ENCODE measurements at regions of chr1 and their contacts with region 1.

Region 1: GRCh38 chr1:186325239-186325638 is 49.8 kb downstream of the TPR start:
- DNase-seq: peak in 4 of 5 donors; percentile 27 to 29 (median 28)
- H3K4me3 ChIP-seq: no peak overlapping the region
- H3K4me3 Mint-ChIP-seq: no peak overlapping the region
- H3K27ac ChIP-seq: no peak overlapping the region
- H3K27ac Mint-ChIP-seq: peak overlapping the region in 2 of 7 donors; percentile 61 to 79
- H3K4me1 ChIP-seq: peaks cover 6% of the 10 kb centered on the region
- H3K4me1 Mint-ChIP-seq: peaks cover 4 to 23% (median 15%) of the 10 kb centered on the region in 4 donors
- H3K27me3 ChIP-seq: no peaks in the 10 kb centered on the region
- H3K27me3 Mint-ChIP-seq: no peaks in the 10 kb centered on the region

Region 2: DNA sequence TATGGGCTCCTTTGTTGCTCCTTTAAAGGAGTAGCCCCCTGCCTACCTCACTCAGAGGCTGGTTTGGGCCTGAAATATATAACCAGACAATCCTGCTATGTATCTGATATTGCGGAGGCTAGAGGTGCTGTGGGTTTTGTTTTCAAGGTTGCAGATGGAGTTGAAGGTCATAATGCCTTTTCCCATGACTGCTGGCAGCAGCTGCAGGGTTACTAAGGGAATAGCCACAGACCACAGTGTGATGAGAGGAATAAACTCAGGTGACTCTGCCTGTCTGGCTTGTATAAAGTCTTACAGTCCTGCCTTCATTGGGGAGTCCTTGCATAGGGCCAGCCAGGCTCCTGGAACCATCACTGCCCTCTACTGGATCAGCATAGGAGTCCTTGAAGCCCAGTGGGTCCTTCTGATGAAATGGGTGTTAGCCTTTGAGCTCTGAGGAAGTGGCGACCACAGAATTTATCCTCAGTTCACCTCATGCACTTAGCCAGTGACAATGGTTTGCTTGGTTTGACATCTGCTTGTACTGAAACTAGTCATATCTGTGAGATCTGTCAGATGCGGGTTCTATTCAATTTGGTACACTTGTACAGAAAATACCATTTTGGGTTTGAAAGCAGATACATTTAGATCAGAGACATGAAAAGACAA is 765.4 kb before region 1 on chr1:
- CTCF ChIA-PET with region 1: no interaction called
- POLR2A ChIA-PET with region 1: no interaction called
- intact Hi-C with region 1: no loop called
- DNase-seq: peak; percentile 56 to 60 (median 59)
- H3K4me3 ChIP-seq: no peak overlapping the region
- H3K4me3 Mint-ChIP-seq: peak overlapping the region in 6 of 8 donors; percentile 5 to 78 (median 62)
- H3K27ac ChIP-seq: no peak overlapping the region
- H3K27ac Mint-ChIP-seq: peak overlapping the region; percentile 76 to 94 (median 86)
- H3K4me1 ChIP-seq: peaks cover 51% of the 10 kb centered on the region
- H3K4me1 Mint-ChIP-seq: peaks cover 39 to 52% (median 46%) of the 10 kb centered on the region in 4 donors
- H3K27me3 ChIP-seq: no peaks in the 10 kb centered on the region
- H3K27me3 Mint-ChIP-seq: no peaks in the 10 kb centered on the region

Region 3: DNA sequence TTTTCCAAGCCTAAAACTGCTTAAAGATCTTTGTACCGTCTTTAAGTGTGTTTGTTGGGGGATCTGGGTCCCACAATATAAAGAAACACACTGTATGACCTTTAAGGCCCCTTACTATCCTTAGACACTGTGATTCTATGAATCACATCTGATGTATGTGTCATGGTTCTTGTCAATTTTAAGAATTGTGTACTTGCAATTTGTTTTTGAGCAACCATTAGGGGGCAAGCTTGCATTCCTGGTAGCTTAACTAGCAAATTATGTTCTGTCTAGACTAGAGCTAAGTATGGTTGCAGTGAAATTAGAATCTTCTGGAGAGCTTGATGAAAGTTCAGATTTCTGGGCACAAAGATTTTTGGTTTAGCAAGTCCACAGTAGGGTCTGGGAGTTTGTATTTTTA is 169.6 kb before region 1 on chr1:
- CTCF ChIA-PET with region 1: no interaction called
- POLR2A ChIA-PET with region 1: no interaction called
- intact Hi-C with region 1: loop called (anchors 10 kb)
- DNase-seq: peak in 1 of 5 donors; percentile 4
- H3K4me3 ChIP-seq: no peak overlapping the region
- H3K4me3 Mint-ChIP-seq: no peak overlapping the region
- H3K27ac ChIP-seq: no peak overlapping the region
- H3K27ac Mint-ChIP-seq: no peak overlapping the region
- H3K4me1 ChIP-seq: no peaks in the 10 kb centered on the region
- H3K4me1 Mint-ChIP-seq: no peaks in the 10 kb centered on the region
- H3K27me3 ChIP-seq: no peaks in the 10 kb centered on the region
- H3K27me3 Mint-ChIP-seq: peaks cover 0 to 4% of the 10 kb centered on the region in 2 donors

Region 4: GRCh38 chr1:186183219-186183618 is 142.0 kb before region 1 on chr1:
- CTCF ChIA-PET with region 1: no interaction called
- POLR2A ChIA-PET with region 1: no interaction called
- intact Hi-C with region 1: no loop called
- DNase-seq: no peak
- H3K4me3 ChIP-seq: no peak overlapping the region
- H3K4me3 Mint-ChIP-seq: no peak overlapping the region
- H3K27ac ChIP-seq: no peak overlapping the region
- H3K27ac Mint-ChIP-seq: no peak overlapping the region
- H3K4me1 ChIP-seq: no peaks in the 10 kb centered on the region
- H3K4me1 Mint-ChIP-seq: peaks cover 0 to 3% (median 0%) of the 10 kb centered on the region in 4 donors
- H3K27me3 ChIP-seq: no peaks in the 10 kb centered on the region
- H3K27me3 Mint-ChIP-seq: peaks cover 0 to 4% of the 10 kb centered on the region in 2 donors

Region 5: GRCh38 chr1:186212544-186213226 is 112.6 kb before region 1 on chr1:
- CTCF ChIA-PET with region 1: no interaction called
- POLR2A ChIA-PET with region 1: no interaction called
- intact Hi-C with region 1: no loop called
- DNase-seq: peak in 4 of 5 donors; percentile 2 to 11 (median 6)
- H3K4me3 ChIP-seq: no peak overlapping the region
- H3K4me3 Mint-ChIP-seq: no peak overlapping the region
- H3K27ac ChIP-seq: no peak overlapping the region
- H3K27ac Mint-ChIP-seq: no peak overlapping the region
- H3K4me1 ChIP-seq: no peaks in the 10 kb centered on the region
- H3K4me1 Mint-ChIP-seq: no peaks in the 10 kb centered on the region
- H3K27me3 ChIP-seq: no peaks in the 10 kb centered on the region
- H3K27me3 Mint-ChIP-seq: peaks cover 5 to 13% of the 10 kb centered on the region in 2 donors

Region 6: GRCh38 chr1:186231962-186232361 is 93.3 kb before region 1 on chr1:
- CTCF ChIA-PET with region 1: no interaction called
- POLR2A ChIA-PET with region 1: no interaction called
- intact Hi-C with region 1: no loop called
- DNase-seq: no peak
- H3K4me3 ChIP-seq: no peak overlapping the region
- H3K4me3 Mint-ChIP-seq: no peak overlapping the region
- H3K27ac ChIP-seq: no peak overlapping the region
- H3K27ac Mint-ChIP-seq: no peak overlapping the region
- H3K4me1 ChIP-seq: no peaks in the 10 kb centered on the region
- H3K4me1 Mint-ChIP-seq: no peaks in the 10 kb centered on the region
- H3K27me3 ChIP-seq: no peaks in the 10 kb centered on the region
- H3K27me3 Mint-ChIP-seq: peaks cover 4 to 13% of the 10 kb centered on the region in 2 donors

Region 7: GRCh38 chr1:186272486-186272885 is 52.8 kb before region 1 on chr1:
- CTCF ChIA-PET with region 1: interaction called, 4 read pairs
- POLR2A ChIA-PET with region 1: no interaction called
- intact Hi-C with region 1: loop called (anchors 1 kb)
- DNase-seq: peak in 4 of 5 donors; percentile 11 to 19 (median 13)
- H3K4me3 ChIP-seq: no peak overlapping the region
- H3K4me3 Mint-ChIP-seq: no peak overlapping the region
- H3K27ac ChIP-seq: no peak overlapping the region
- H3K27ac Mint-ChIP-seq: no peak overlapping the region
- H3K4me1 ChIP-seq: no peaks in the 10 kb centered on the region
- H3K4me1 Mint-ChIP-seq: peaks cover 0 to 2% (median 0%) of the 10 kb centered on the region in 4 donors
- H3K27me3 ChIP-seq: no peaks in the 10 kb centered on the region
- H3K27me3 Mint-ChIP-seq: no peaks in the 10 kb centered on the region

Region 8: GRCh38 chr1:186304982-186305949 is 20.0 kb before region 1 on chr1:
- CTCF ChIA-PET with region 1: interaction called, 9 read pairs
- POLR2A ChIA-PET with region 1: interaction called, 4 read pairs
- intact Hi-C with region 1: loop called (anchors 1 kb)
- DNase-seq: peak in 3 of 5 donors; percentile 25 to 42 (median 34)
- H3K4me3 ChIP-seq: no peak overlapping the region
- H3K4me3 Mint-ChIP-seq: peak overlapping the region in 3 of 8 donors; percentile 3 to 54 (median 37)
- H3K27ac ChIP-seq: no peak overlapping the region
- H3K27ac Mint-ChIP-seq: peak overlapping the region; percentile 53 to 91 (median 79)
- H3K4me1 ChIP-seq: peaks cover 79% of the 10 kb centered on the region
- H3K4me1 Mint-ChIP-seq: peaks cover 31 to 45% (median 39%) of the 10 kb centered on the region in 4 donors
- H3K27me3 ChIP-seq: no peaks in the 10 kb centered on the region
- H3K27me3 Mint-ChIP-seq: peaks cover 0 to 1% of the 10 kb centered on the region in 2 donors

Region 9: DNA sequence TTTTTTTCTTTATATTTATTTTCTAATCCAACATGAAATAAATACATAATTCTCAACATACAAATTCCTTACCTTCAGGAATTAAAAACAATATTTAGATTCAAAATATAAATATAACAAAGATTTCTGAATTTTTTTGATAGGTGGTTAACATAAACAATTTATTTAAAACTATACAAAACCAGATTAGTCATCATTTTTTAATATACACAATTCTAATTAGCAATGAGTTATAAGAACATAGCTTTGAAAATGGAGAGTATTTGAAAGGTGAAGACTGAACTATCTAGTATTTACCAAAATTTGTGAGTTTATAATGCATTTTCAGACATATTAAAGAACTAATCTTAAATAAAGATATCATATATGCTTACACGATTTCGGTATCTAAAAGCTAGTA is 12.3 kb after region 1 on chr1:
- CTCF ChIA-PET with region 1: no interaction called
- POLR2A ChIA-PET with region 1: no interaction called
- intact Hi-C with region 1: loop called (anchors 2 kb)
- DNase-seq: no peak
- H3K4me3 ChIP-seq: no peak overlapping the region
- H3K4me3 Mint-ChIP-seq: no peak overlapping the region
- H3K27ac ChIP-seq: no peak overlapping the region
- H3K27ac Mint-ChIP-seq: no peak overlapping the region
- H3K4me1 ChIP-seq: no peaks in the 10 kb centered on the region
- H3K4me1 Mint-ChIP-seq: peaks cover 0 to 3% (median 0%) of the 10 kb centered on the region in 4 donors
- H3K27me3 ChIP-seq: no peaks in the 10 kb centered on the region
- H3K27me3 Mint-ChIP-seq: no peaks in the 10 kb centered on the region

Region 10: GRCh38 chr1:186363891-186364290 is 38.7 kb after region 1 on chr1:
- CTCF ChIA-PET with region 1: interaction called, 3 read pairs
- POLR2A ChIA-PET with region 1: no interaction called
- intact Hi-C with region 1: loop called (anchors 5 kb)
- DNase-seq: no peak
- H3K4me3 ChIP-seq: no peak overlapping the region
- H3K4me3 Mint-ChIP-seq: no peak overlapping the region
- H3K27ac ChIP-seq: no peak overlapping the region
- H3K27ac Mint-ChIP-seq: no peak overlapping the region
- H3K4me1 ChIP-seq: no peaks in the 10 kb centered on the region
- H3K4me1 Mint-ChIP-seq: peaks cover 8 to 17% (median 13%) of the 10 kb centered on the region in 4 donors
- H3K27me3 ChIP-seq: no peaks in the 10 kb centered on the region
- H3K27me3 Mint-ChIP-seq: no peaks in the 10 kb centered on the region

Measured in CD4-positive, alpha-beta memory T cell (primary cell).